ENCODE measurements at regions of chr6 and their contacts with region 1.

Region 1: DNA sequence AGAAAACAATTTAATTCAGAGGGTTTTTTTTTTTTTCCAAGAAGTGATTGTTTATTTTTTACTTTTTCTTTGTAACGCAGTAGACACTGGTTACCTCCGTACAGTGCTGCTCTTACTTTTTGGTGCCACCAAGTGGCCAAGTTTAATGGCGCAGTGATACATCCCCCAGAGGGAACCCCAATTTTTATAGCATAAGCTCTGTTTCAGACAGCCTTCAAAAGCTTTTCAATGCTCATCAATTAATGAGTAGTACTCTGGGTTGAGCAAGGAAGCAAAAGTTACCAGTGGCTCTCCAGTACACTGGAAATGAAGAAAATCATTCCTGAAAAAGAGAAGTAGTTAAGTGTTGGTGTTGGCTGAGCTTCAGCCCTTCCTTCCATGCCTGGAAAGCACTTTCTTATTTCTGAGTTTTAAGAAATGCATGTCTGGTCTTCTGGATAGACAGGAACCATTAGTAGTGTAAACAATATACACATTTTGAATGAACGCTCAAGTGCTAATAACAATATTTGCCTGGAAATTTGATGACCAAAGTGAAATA is 129.1 kb upstream of the SMLR1 start:
- DNase-seq: peak; percentile 50
- H3K4me3 Mint-ChIP-seq: no peak overlapping the region
- H3K27ac Mint-ChIP-seq: peak overlapping the region; percentile 48
- H3K4me1 Mint-ChIP-seq: peaks cover 39% of the 10 kb centered on the region
- H3K27me3 Mint-ChIP-seq: peaks cover 6% of the 10 kb centered on the region

Region 2: DNA sequence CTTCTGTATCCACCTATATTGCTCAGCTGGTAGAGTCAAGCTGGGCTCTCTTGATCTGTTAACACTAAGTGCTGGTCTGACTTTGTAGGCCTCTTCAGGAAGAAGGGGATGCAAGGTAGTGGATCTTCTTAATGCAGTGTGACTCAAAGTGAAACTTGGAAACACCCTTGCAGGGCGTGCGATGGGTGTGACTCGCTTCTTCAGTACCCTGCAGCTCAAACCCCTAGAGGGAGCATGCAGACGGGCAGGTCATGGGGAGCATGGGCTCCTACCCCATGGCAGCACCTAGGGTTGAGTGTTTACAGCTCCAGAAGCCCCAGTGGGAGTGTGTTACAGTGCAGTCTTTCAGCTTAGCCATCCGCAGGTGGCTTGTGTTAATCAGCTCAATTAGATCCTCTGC is 474.6 kb before region 1 on chr6:
- intact Hi-C with region 1: loop called (anchors 1 kb)
- DNase-seq: peak; percentile 73
- H3K4me3 Mint-ChIP-seq: peak overlapping the region; percentile 6
- H3K27ac Mint-ChIP-seq: peak overlapping the region; percentile 72
- H3K4me1 Mint-ChIP-seq: peaks cover 43% of the 10 kb centered on the region
- H3K27me3 Mint-ChIP-seq: no peaks in the 10 kb centered on the region

Region 3: DNA sequence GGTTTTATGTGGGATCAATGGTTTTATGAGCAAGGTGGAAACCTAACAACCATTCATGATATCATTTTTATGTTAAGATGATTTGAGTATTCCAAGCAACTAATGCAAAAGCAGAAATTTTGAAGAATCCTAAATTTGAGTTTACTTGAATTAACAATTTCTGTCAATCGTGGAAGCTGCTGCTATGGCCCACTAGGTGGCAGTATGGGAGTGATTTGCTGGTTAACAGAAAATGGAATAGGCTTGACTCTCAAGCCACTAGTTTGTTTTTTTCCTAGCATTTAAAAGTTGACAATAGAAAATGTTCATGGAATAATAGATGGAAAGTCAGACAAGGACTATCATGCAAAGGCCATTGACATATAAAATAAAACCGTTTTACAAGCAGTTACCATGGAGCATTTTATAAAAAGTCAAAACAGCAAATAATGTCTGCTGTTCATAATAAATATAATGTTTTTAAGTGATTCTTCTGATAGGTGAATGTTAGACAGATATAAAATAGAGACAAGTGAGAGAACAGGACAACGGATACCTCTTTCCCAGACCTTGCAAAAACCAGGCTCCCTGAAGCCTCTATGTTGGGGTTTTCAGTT is 375.3 kb before region 1 on chr6:
- intact Hi-C with region 1: loop called (anchors 1 kb)
- DNase-seq: peak; percentile 26
- H3K4me3 Mint-ChIP-seq: no peak overlapping the region
- H3K27ac Mint-ChIP-seq: no peak overlapping the region
- H3K4me1 Mint-ChIP-seq: peaks cover 7% of the 10 kb centered on the region
- H3K27me3 Mint-ChIP-seq: peaks cover 11% of the 10 kb centered on the region

Region 4: DNA sequence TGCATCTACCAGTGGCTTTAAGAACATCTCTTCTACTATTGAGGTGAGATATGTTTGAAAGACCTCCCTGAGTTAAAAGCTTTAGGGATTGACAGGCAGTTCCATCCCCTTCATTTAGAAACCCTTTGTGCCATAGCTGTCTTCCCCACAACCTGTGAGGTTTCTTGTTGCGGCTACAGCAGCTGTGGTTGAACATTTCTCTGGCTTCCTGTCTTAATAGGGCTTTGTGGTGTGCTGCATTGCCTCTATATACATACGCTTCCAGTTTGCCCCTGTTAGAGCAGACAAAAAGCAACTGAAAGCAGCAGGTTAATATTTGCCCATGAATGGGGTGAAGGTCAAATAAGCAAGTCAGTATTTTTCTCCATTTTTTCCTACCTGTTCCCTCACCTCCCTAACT is 122.1 kb before region 1 on chr6:
- intact Hi-C with region 1: loop called (anchors 5 kb)
- DNase-seq: peak; percentile 74
- H3K4me3 Mint-ChIP-seq: peak overlapping the region; percentile 62
- H3K27ac Mint-ChIP-seq: peak overlapping the region; percentile 72
- H3K4me1 Mint-ChIP-seq: peaks cover 48% of the 10 kb centered on the region
- H3K27me3 Mint-ChIP-seq: no peaks in the 10 kb centered on the region

Region 5: DNA sequence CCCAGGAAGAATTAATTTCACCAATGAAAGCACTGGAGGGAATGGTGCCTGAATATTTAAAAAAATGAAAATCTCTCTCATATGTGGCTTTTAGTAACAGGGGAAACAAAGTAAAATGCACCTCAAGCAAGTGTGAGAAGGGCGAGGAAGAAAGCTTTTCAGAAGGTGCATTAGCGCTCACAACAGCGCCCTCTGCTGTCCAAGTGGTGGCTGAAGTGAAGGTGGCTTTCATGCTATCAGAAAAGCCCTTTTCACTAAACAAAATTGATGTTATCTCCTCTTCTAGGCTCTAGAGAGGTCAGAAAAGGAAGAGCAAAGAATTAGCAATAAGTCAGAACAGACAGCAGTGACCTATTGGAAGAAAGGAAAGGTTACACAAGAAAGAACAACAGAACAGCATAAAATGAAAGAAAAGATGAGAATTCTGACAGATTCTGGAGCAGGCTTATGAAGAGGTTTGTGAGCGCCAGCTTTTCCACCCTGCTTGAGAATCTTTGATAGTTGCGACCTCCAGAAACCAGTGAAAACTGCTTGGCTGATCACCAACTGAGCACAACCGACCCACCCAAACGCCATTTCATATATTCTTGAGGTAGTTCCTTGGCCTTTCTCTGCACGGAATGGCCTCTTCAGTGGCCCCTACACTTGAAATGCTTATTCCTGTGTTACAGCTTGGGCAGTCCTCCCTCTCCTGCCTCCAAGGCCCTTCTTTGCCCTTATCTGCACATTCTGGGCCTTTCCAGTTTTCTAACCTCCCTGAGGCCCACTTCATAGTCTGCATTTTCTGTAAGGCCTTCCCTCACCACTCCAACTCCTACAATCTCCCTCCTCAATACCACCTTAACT is 174.4 kb after region 1 on chr6:
- intact Hi-C with region 1: loop called (anchors 2 kb)
- DNase-seq: peak; percentile 40
- H3K4me3 Mint-ChIP-seq: no peak overlapping the region
- H3K27ac Mint-ChIP-seq: no peak overlapping the region
- H3K4me1 Mint-ChIP-seq: peaks cover 4% of the 10 kb centered on the region
- H3K27me3 Mint-ChIP-seq: no peaks in the 10 kb centered on the region

Measured in activated T-helper 1 cell treated with anti-CD3 and anti-CD28 coated beads, Interleukin-12 subunit alpha, Interleukin-12 subunit beta, Interleukin-2, Interleukin-4 antibody, amounts not matched to agents 30 ng/mL and 10 ng/mL and 1 ng/mL, durations not matched to agents 14 hours and 24 hours and 36 hours (primary cell).